ENCODE measurements at regions of chr6 and their contacts with region 1.

Region 1: GRCh38 chr6:156747715-156748114 is 29.5 kb upstream of the ARID1B start:
- DNase-seq: no peak
- H3K4me3 ChIP-seq: no peak overlapping the region
- H3K27ac ChIP-seq: no peak overlapping the region
- H3K4me1 ChIP-seq: peaks cover 23% of the 10 kb centered on the region
- CTCF ChIP-seq: no peak

Region 2: GRCh38 chr6:155301867-155302266 is 1445.8 kb before region 1 on chr6:
- CTCF ChIA-PET with region 1: no interaction called
- POLR2A ChIA-PET with region 1: no interaction called
- intact Hi-C with region 1: no loop called
- DNase-seq: no peak
- H3K4me3 ChIP-seq: no peak overlapping the region
- H3K27ac ChIP-seq: no peak overlapping the region
- H3K4me1 ChIP-seq: no peaks in the 10 kb centered on the region
- CTCF ChIP-seq: no peak

Region 3: DNA sequence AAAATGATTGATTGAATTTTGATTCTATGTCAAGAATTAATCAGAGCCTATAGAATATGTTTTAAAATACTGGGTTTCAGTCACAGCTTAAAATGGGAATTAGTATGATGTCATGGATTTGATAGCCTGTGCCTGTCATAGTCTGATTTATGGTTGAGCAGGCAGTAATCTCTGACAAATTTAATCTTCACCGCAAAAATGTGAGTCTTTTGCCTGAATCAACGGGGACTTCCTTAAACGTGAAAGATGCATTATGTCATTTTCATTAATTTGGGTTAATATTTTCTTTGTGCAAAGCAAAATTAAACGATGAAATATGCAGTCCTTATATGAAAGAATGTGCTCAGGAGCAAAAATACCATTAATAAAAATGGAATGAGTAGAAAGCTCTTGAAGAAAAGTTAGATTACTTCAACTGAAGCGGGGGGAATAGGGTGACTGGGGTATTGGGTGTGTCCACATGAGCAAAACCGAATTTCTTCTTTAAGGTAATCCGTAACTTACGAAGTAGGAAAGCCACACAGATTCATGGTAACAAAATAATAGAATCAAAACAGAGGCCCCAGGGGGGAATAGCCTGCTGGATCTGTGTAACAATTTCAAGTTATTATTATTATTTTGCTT is 952.4 kb before region 1 on chr6:
- CTCF ChIA-PET with region 1: no interaction called
- POLR2A ChIA-PET with region 1: no interaction called
- intact Hi-C with region 1: no loop called
- DNase-seq: no peak
- H3K4me3 ChIP-seq: no peak overlapping the region
- H3K27ac ChIP-seq: no peak overlapping the region
- H3K4me1 ChIP-seq: no peaks in the 10 kb centered on the region
- CTCF ChIP-seq: no peak

Region 4: DNA sequence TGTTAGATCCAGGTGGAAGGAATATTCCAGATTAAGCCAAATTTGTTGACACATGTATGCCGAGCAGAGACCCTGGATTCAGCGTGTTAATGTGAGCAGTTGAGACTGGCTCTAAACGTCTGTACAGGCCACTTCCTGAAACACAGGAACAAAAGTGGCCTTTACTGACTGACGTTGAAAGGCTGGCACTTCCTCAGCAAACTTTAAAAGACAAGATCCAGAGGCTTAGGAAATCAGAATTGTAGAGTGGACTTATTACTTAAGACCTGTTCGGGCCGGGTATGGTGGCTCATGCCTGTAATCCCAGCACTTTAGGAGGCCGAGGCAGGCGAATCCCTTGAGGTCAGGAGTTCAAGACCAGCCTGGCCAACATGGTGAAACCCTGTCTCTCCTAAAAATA is 96.2 kb before region 1 on chr6:
- CTCF ChIA-PET with region 1: no interaction called
- POLR2A ChIA-PET with region 1: no interaction called
- intact Hi-C with region 1: no loop called
- DNase-seq: no peak
- H3K4me3 ChIP-seq: no peak overlapping the region
- H3K27ac ChIP-seq: no peak overlapping the region
- H3K4me1 ChIP-seq: no peaks in the 10 kb centered on the region
- CTCF ChIP-seq: no peak

Region 5: DNA sequence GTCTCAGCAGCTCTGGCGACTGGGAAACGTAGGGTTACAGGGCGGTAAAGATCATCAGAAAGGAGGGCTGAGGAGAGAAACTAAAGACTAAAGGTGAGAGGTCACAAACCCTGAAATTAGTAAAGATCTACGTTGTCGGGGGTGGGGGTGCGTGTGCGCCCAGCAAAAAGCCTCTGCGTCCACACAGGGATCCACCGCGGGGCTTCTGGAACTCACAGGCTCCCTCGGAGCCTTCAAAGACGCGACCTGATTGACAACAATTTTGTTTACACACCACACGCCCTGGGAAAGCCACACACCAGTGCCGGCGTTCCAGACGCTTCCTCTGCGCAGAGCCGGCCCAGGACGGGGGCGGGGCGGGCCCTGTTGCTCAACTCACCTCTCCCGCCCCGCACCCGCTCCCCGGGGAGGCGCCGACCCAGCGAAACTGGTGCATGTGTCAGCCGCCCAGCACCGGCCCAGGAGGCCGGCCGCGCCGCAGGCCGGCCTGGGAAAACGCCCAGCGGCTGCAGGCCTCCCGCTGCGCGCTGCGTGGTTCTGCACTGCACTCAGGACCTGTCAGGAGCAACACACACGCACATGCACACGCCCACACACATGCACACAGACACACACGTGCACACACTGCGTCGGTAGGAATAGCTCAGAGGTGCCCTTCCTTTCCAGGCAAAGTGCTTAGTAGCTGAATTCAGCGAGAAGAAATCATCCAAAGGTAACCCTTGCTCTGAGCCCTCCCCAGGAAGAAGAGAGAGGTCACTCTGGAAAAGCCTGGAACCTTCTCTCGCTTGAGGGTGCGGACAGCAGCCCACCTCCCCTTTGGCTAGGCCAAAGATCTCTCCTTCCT is 27.8 kb before region 1 on chr6:
- CTCF ChIA-PET with region 1: interaction called, 4 read pairs
- POLR2A ChIA-PET with region 1: interaction called, 10 read pairs
- intact Hi-C with region 1: no loop called
- DNase-seq: peak; percentile 64
- H3K4me3 ChIP-seq: peak overlapping the region; percentile 42
- H3K27ac ChIP-seq: peak overlapping the region; percentile 45
- H3K4me1 ChIP-seq: peaks cover 28% of the 10 kb centered on the region
- CTCF ChIP-seq: no peak